GM12878 (cell line): ENCODE measurements at regions of chr7 and their contacts with region 1.

Region 1: DNA sequence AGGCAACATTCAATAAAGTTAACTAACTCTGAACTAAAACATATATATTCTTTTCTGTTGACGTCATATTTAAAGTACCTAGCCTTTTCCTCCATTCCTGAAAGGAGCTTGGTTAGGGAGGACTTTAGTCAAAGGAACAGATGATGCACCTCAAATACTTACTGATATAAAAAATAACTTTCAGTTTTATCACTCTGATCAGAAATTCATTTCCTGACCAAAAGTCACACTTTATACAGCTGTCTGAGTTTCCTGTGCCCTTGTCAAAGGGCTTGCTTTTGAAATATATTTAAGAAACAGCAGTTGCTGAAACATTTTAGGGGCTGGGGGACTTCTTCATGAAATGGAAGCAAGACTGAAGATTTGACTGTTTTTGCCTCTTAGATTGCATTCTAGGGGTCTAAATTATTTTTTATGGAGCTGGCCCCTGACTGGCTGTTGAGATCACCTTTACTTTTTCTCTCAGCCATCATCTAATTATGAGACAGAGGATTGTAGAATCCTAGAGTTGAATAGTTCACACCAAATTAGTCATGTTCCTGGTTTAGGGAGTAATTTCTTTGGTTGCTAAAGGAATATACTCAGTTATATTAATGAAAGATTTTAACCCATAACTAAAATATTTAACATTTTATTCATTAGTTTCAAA is 46.6 kb downstream of the GLCCI1 start:
- DNase-seq: no peak
- ATAC-seq: no peak
- H3K4me3 ChIP-seq: no peak overlapping the region
- H3K27ac ChIP-seq: no peak overlapping the region
- H3K4me1 ChIP-seq: no peaks in the 10 kb centered on the region
- H3K27me3 ChIP-seq: no peaks in the 10 kb centered on the region
- CTCF ChIP-seq: no peak
- EP300 ChIP-seq: no peak
- POLR2A ChIP-seq: no peak
- RAD21 ChIP-seq: no peak

Region 2: DNA sequence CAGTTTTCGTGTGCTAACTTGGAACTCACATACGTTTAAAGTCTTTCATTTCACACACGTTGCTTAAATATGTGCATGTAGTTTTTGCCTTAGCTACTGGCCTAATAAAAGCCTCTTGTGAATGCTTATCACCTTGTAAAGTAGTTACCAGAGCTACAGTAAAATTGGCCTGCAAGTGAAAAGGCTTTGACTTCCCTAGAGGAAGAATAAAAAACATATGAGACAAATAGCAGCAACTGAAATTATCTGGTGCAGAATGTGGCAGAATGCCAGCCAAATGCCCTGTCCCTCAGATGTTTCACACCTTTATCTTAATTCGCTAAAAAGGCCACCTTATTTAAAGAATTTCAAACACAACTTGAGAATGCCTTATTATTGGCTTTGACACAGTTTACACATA is 268.8 kb before region 1 on chr7:
- CTCF ChIA-PET with region 1: no interaction called
- POLR2A ChIA-PET with region 1: no interaction called
- RAD21 ChIA-PET with region 1: no interaction called
- SMC1A ChIA-PET with region 1: no interaction called
- in situ Hi-C with region 1: no loop called
- intact Hi-C with region 1: no loop called
- DNase-seq: no peak
- ATAC-seq: no peak
- H3K4me3 ChIP-seq: no peak overlapping the region
- H3K27ac ChIP-seq: no peak overlapping the region
- H3K4me1 ChIP-seq: no peaks in the 10 kb centered on the region
- H3K27me3 ChIP-seq: no peaks in the 10 kb centered on the region
- CTCF ChIP-seq: no peak
- EP300 ChIP-seq: no peak
- POLR2A ChIP-seq: no peak
- RAD21 ChIP-seq: no peak

Region 3: DNA sequence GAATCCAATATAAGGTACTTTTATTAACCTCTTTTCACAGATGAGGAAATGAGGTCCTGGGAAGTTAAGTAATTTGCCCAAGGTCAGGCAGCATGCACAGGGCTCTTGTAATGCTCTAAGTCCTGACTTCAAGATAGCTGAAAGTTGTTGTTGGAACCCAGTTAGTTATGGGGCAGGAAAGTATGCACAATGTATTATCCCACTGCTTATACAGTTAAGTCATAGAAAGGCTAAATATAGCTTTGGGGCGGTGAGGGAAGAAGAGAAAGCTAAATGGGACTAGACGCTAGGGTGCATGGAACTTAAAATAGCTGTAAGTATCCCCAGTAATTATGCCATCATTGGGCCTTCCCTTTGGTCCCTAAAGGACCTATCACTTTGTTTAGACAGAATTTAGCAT is 37.5 kb before region 1 on chr7:
- CTCF ChIA-PET with region 1: interaction called, 3 read pairs
- POLR2A ChIA-PET with region 1: no interaction called
- RAD21 ChIA-PET with region 1: interaction called, 21 read pairs
- SMC1A ChIA-PET with region 1: interaction called, 17 read pairs
- in situ Hi-C with region 1: no loop called
- intact Hi-C with region 1: no loop called
- DNase-seq: no peak
- ATAC-seq: peak; percentile 4
- H3K4me3 ChIP-seq: peak overlapping the region; percentile 47; the same call in 1 of the 2 replicates
- H3K27ac ChIP-seq: peak overlapping the region; percentile 30; the same call in 1 of the 2 replicates
- H3K4me1 ChIP-seq: peaks cover 4% of the 10 kb centered on the region; the same call in 1 of the 2 replicates
- H3K27me3 ChIP-seq: no peaks in the 10 kb centered on the region
- CTCF ChIP-seq: no peak
- EP300 ChIP-seq: no peak
- POLR2A ChIP-seq: no peak
- RAD21 ChIP-seq: no peak

Region 4: DNA sequence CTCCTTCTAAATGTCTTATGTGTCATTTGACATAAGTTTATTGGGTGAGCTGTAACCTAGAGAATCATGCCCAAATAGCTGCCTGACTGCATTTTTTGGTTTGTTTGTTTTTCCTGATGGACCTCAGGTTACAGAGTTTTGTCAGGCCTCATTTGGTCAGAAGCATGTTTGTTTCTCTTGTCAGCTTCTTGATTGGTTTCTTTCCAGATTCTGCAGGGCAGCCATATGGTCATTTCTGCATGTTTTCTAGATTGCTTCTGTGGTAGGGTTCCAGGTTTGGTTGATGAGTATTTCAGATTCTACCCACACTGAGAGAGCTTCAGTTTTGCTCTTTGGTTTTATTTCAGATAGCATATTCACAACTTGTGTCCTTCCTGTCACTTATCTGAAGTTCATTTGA is 18.6 kb before region 1 on chr7:
- CTCF ChIA-PET with region 1: no interaction called
- POLR2A ChIA-PET with region 1: interaction called, 3 read pairs
- RAD21 ChIA-PET with region 1: interaction called, 3 read pairs
- SMC1A ChIA-PET with region 1: interaction called, 18 read pairs
- in situ Hi-C with region 1: no loop called
- intact Hi-C with region 1: no loop called
- DNase-seq: no peak
- ATAC-seq: peak; percentile 64
- H3K4me3 ChIP-seq: no peak overlapping the region
- H3K27ac ChIP-seq: peak overlapping the region; percentile 20; the same call in 1 of the 2 replicates
- H3K4me1 ChIP-seq: peaks cover 5% of the 10 kb centered on the region; the same call in 1 of the 2 replicates
- H3K27me3 ChIP-seq: no peaks in the 10 kb centered on the region
- CTCF ChIP-seq: no peak
- EP300 ChIP-seq: no peak
- POLR2A ChIP-seq: no peak
- RAD21 ChIP-seq: no peak

Region 5: GRCh38 chr7:8035647-8036518 is 20.7 kb after region 1 on chr7:
- CTCF ChIA-PET with region 1: interaction called, 5 read pairs
- POLR2A ChIA-PET with region 1: no interaction called
- RAD21 ChIA-PET with region 1: interaction called, 4 read pairs
- SMC1A ChIA-PET with region 1: interaction called, 17 read pairs
- in situ Hi-C with region 1: no loop called
- intact Hi-C with region 1: no loop called
- DNase-seq: peak; percentile 23
- ATAC-seq: peak; percentile 88
- H3K4me3 ChIP-seq: no peak overlapping the region
- H3K27ac ChIP-seq: no peak overlapping the region
- H3K4me1 ChIP-seq: no peaks in the 10 kb centered on the region
- H3K27me3 ChIP-seq: no peaks in the 10 kb centered on the region
- CTCF ChIP-seq: peak in 2 of 3 experiments; percentile 50 to 57; a peak in 4 of 6 replicates
- EP300 ChIP-seq: no peak
- POLR2A ChIP-seq: no peak
- RAD21 ChIP-seq: peak; percentile 38

Region 6: GRCh38 chr7:8125680-8126444 is 110.6 kb after region 1 on chr7:
- CTCF ChIA-PET with region 1: no interaction called
- POLR2A ChIA-PET with region 1: interaction called, 4 read pairs
- RAD21 ChIA-PET with region 1: interaction called, 10 read pairs
- SMC1A ChIA-PET with region 1: interaction called, 9 read pairs
- in situ Hi-C with region 1: no loop called
- intact Hi-C with region 1: no loop called
- DNase-seq: peak; percentile 95
- ATAC-seq: peak; percentile 80
- H3K4me3 ChIP-seq: no peak overlapping the region; the same call in 1 of the 2 replicates
- H3K27ac ChIP-seq: peak overlapping the region; percentile 90
- H3K4me1 ChIP-seq: peaks cover 68% of the 10 kb centered on the region
- H3K27me3 ChIP-seq: no peaks in the 10 kb centered on the region
- CTCF ChIP-seq: no peak
- EP300 ChIP-seq: peak; percentile 66 to 81
- POLR2A ChIP-seq: peak; percentile 74
- RAD21 ChIP-seq: peak; percentile 25

Region 7: GRCh38 chr7:8277394-8277982 is 262.3 kb after region 1 on chr7:
- CTCF ChIA-PET with region 1: no interaction called
- POLR2A ChIA-PET with region 1: no interaction called
- RAD21 ChIA-PET with region 1: no interaction called
- SMC1A ChIA-PET with region 1: no interaction called
- in situ Hi-C with region 1: no loop called
- intact Hi-C with region 1: no loop called
- DNase-seq: no peak
- ATAC-seq: peak; percentile 55
- H3K4me3 ChIP-seq: no peak overlapping the region
- H3K27ac ChIP-seq: no peak overlapping the region
- H3K4me1 ChIP-seq: no peaks in the 10 kb centered on the region
- H3K27me3 ChIP-seq: peaks cover 0 to 1% of the 10 kb centered on the region in 2 experiments; a peak in 2 of 4 replicates
- CTCF ChIP-seq: peak; percentile 11 to 30 (median 24); a peak in 4 of 6 replicates
- EP300 ChIP-seq: no peak
- POLR2A ChIP-seq: no peak
- RAD21 ChIP-seq: peak; percentile 43